ENCODE measurements at regions of chr4 and their contacts with region 1.

Region 1: GRCh38 chr4:153649572-153649991 is 34.5 kb upstream of the TLR2 start:
- DNase-seq: no peak
- H3K4me3 ChIP-seq: no peak overlapping the region
- H3K4me3 Mint-ChIP-seq: no peak overlapping the region
- H3K27ac ChIP-seq: no peak overlapping the region
- H3K27ac Mint-ChIP-seq: no peak overlapping the region
- H3K4me1 ChIP-seq: peaks cover 19% of the 10 kb centered on the region
- H3K4me1 Mint-ChIP-seq: peaks cover 20 to 33% (median 23%) of the 10 kb centered on the region in 4 donors
- H3K27me3 ChIP-seq: no peaks in the 10 kb centered on the region
- H3K27me3 Mint-ChIP-seq: no peaks in the 10 kb centered on the region

Region 2: GRCh38 chr4:153634738-153635353 is 14.7 kb before region 1 on chr4:
- CTCF ChIA-PET with region 1: interaction called, 54 read pairs
- POLR2A ChIA-PET with region 1: interaction called, 4 read pairs
- intact Hi-C with region 1: no loop called
- DNase-seq: peak in 4 of 5 donors; percentile 13 to 20 (median 18)
- H3K4me3 ChIP-seq: no peak overlapping the region
- H3K4me3 Mint-ChIP-seq: no peak overlapping the region
- H3K27ac ChIP-seq: no peak overlapping the region
- H3K27ac Mint-ChIP-seq: peak overlapping the region in 3 of 7 donors; percentile 17 to 35 (median 31)
- H3K4me1 ChIP-seq: no peaks in the 10 kb centered on the region
- H3K4me1 Mint-ChIP-seq: peaks cover 0 to 6% (median 0%) of the 10 kb centered on the region in 4 donors
- H3K27me3 ChIP-seq: no peaks in the 10 kb centered on the region
- H3K27me3 Mint-ChIP-seq: no peaks in the 10 kb centered on the region